SK-N-SH (cell line): ENCODE measurements at regions of chr9 and their contacts with region 1.

Region 1: GRCh38 chr9:130866474-130866965 is 30.1 kb downstream of the QRFP start:
- DNase-seq: peak; percentile 79
- H3K4me3 ChIP-seq: peak overlapping the region in 1 of 2 experiments; percentile 24; a peak in 1 of 4 replicates
- H3K27ac ChIP-seq: no peak overlapping the region; a peak in 1 of 4 replicates
- H3K4me1 ChIP-seq: peaks cover 0 to 13% of the 10 kb centered on the region in 2 experiments; a peak in 2 of 4 replicates
- H3K27me3 ChIP-seq: no peaks in the 10 kb centered on the region
- CTCF ChIP-seq: peak; percentile 99
- EP300 ChIP-seq: 0 out of 4 replicates have a peak, but pooled peaks of 1 of the 2 experiments have one; percentile 12
- RAD21 ChIP-seq: peak; percentile 77

Region 2: GRCh38 chr9:130756037-130756436 is 110.5 kb before region 1 on chr9:
- CTCF ChIA-PET with region 1: interaction called, 14 read pairs
- POLR2A ChIA-PET with region 1: no interaction called
- DNase-seq: no peak
- H3K4me3 ChIP-seq: no peak overlapping the region
- H3K27ac ChIP-seq: peak overlapping the region in 1 of 2 experiments; percentile 9; a peak in 1 of 4 replicates
- H3K4me1 ChIP-seq: peaks cover 6 to 11% of the 10 kb centered on the region in 2 experiments; a peak in 2 of 4 replicates
- H3K27me3 ChIP-seq: no peaks in the 10 kb centered on the region
- CTCF ChIP-seq: no peak
- EP300 ChIP-seq: no peak
- RAD21 ChIP-seq: no peak

Region 3: DNA sequence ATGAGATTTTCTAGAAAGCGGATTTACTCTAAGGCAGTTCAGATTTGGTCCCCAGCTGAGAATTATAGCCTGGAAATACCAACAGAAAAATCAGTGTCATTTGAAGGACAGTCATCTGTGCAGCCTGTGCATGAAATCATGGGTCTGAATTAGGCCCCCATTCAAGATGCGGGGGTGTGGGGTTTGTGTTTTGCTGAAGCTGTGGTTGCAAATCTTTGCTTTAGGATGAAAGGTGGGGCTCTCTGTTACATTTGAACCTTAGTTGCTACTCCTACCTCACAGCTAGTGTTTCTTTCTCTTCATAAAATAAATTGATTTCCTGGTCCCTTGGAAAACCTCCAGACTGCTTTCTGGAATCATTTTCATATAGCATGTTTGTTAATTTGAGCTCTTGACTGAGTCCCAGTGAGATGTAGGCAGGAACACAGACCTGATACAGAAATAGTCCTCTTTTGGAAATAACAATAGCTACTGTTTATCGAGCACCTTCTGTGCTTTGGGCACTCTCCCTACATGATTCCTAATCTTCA is 36.2 kb before region 1 on chr9:
- CTCF ChIA-PET with region 1: interaction called, 11 read pairs
- POLR2A ChIA-PET with region 1: no interaction called
- DNase-seq: no peak
- H3K4me3 ChIP-seq: no peak overlapping the region
- H3K27ac ChIP-seq: no peak overlapping the region; a peak in 1 of 4 replicates
- H3K4me1 ChIP-seq: peaks cover 29 to 36% of the 10 kb centered on the region in 2 experiments
- H3K27me3 ChIP-seq: no peaks in the 10 kb centered on the region
- CTCF ChIP-seq: no peak
- EP300 ChIP-seq: no peak
- RAD21 ChIP-seq: no peak

Region 4: GRCh38 chr9:130854092-130854491 is 12.4 kb before region 1 on chr9:
- CTCF ChIA-PET with region 1: interaction called, 86 read pairs
- POLR2A ChIA-PET with region 1: no interaction called
- DNase-seq: no peak
- H3K4me3 ChIP-seq: no peak overlapping the region
- H3K27ac ChIP-seq: no peak overlapping the region
- H3K4me1 ChIP-seq: peaks cover 3 to 26% of the 10 kb centered on the region in 2 experiments; a peak in 3 of 4 replicates
- H3K27me3 ChIP-seq: no peaks in the 10 kb centered on the region
- CTCF ChIP-seq: no peak
- EP300 ChIP-seq: no peak
- RAD21 ChIP-seq: no peak

Region 5: GRCh38 chr9:130912932-130913598 is 46.5 kb after region 1 on chr9:
- CTCF ChIA-PET with region 1: interaction called, 11 read pairs
- POLR2A ChIA-PET with region 1: no interaction called
- DNase-seq: no peak
- H3K4me3 ChIP-seq: no peak overlapping the region
- H3K27ac ChIP-seq: no peak overlapping the region
- H3K4me1 ChIP-seq: peaks cover 0 to 3% of the 10 kb centered on the region in 2 experiments; a peak in 1 of 4 replicates
- H3K27me3 ChIP-seq: no peaks in the 10 kb centered on the region
- CTCF ChIP-seq: no peak
- EP300 ChIP-seq: no peak
- RAD21 ChIP-seq: no peak

Region 6: DNA sequence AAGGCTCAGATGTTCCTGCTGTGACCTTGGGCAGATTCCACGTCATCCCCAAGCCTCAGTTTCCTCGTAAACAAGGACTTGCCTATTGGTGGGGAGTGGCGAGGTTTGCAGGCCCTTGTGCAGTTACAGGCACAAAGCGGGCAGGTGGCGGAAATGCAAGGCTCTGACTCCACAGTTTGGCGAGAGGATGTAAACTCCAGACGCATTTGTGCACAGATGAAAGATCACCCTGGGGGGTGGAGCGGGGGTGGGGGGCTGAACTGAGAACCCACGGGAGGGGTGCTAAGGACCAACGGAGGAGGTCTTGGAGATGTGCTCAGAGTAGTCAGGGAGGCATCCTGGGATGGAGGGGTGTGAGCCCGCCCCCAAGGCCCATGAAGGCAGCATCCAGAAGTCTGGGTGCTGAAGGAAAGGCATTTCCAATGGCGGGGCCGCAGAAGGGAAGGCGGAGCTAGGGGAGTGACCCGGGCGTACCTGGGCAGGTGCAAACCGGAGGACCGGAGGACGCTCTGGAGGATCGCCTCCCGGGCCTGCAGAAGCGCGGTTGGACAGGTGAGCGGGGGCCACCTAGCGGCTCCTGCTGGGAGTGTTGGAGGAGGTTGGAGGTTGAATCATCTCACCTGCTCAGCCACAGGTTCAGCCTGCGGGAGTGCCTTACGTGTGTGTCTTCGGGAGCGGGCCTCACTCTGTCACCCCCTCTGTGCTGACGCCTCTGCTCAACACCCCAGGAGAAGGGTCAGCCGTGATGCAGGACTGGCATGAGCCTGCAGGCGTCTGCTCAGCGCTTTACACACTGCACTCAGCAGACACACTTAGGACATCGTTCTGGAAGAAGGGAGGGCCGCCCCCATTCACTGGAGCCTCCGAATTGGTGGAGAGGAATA is 74.4 kb after region 1 on chr9:
- CTCF ChIA-PET with region 1: interaction called, 17 read pairs
- POLR2A ChIA-PET with region 1: no interaction called
- DNase-seq: peak; percentile 84
- H3K4me3 ChIP-seq: peak overlapping the region in 1 of 2 experiments; percentile 28; a peak in 2 of 4 replicates
- H3K27ac ChIP-seq: no peak overlapping the region
- H3K4me1 ChIP-seq: peaks cover 0 to 10% of the 10 kb centered on the region in 2 experiments; a peak in 1 of 4 replicates
- H3K27me3 ChIP-seq: peaks cover 49% of the 10 kb centered on the region
- CTCF ChIP-seq: peak; percentile 83
- EP300 ChIP-seq: no peak
- RAD21 ChIP-seq: peak; percentile 79

Region 7: GRCh38 chr9:131046581-131047202 is 180.2 kb after region 1 on chr9:
- CTCF ChIA-PET with region 1: interaction called, 116 read pairs
- POLR2A ChIA-PET with region 1: interaction called, 3 read pairs
- DNase-seq: peak; percentile 89
- H3K4me3 ChIP-seq: peak overlapping the region in 1 of 2 experiments; percentile 55; a peak in 1 of 4 replicates
- H3K27ac ChIP-seq: no peak overlapping the region
- H3K4me1 ChIP-seq: no peaks in the 10 kb centered on the region; a peak in 1 of 4 replicates
- H3K27me3 ChIP-seq: no peaks in the 10 kb centered on the region
- CTCF ChIP-seq: peak; percentile 89
- EP300 ChIP-seq: no peak
- RAD21 ChIP-seq: peak; percentile 85